Left lung (tissue), 14 donors: ENCODE measurements at regions of chr6 and their contacts with region 1.

Region 1: GRCh38 chr6:108896111-108896661 is 48.0 kb downstream of the ARMC2 start:
- DNase-seq: peak in 1 of 4 donors; percentile 48
- ATAC-seq: peak; percentile 46
- H3K4me3 ChIP-seq: no peak overlapping the region
- H3K27ac ChIP-seq: peak overlapping the region; percentile 68 to 82
- H3K4me1 ChIP-seq: peaks cover 6 to 35% of the 10 kb centered on the region in 2 donors
- H3K27me3 ChIP-seq: no peaks in the 10 kb centered on the region
- CTCF ChIP-seq: no peak

Region 2: GRCh38 chr6:108549732-108550131 is 346.5 kb before region 1 on chr6:
- intact Hi-C with region 1: loop called in 1 of 2 experiments (anchors 5 kb)
- DNase-seq: no peak
- ATAC-seq: no peak
- H3K4me3 ChIP-seq: no peak overlapping the region
- H3K27ac ChIP-seq: no peak overlapping the region
- H3K4me1 ChIP-seq: no peaks in the 10 kb centered on the region
- H3K27me3 ChIP-seq: no peaks in the 10 kb centered on the region
- CTCF ChIP-seq: no peak

Region 3: GRCh38 chr6:109059571-109060021 is 163.4 kb after region 1 on chr6:
- intact Hi-C with region 1: loop called in 1 of 2 experiments (anchors 10 kb)
- DNase-seq: no peak
- ATAC-seq: peak; percentile 84
- H3K4me3 ChIP-seq: no peak overlapping the region
- H3K27ac ChIP-seq: peak overlapping the region; percentile 50 to 64
- H3K4me1 ChIP-seq: peaks cover 21 to 37% of the 10 kb centered on the region in 2 donors
- H3K27me3 ChIP-seq: no peaks in the 10 kb centered on the region
- CTCF ChIP-seq: no peak